ENCODE measurements at regions of chr18 and their contacts with region 1.

Region 1: DNA sequence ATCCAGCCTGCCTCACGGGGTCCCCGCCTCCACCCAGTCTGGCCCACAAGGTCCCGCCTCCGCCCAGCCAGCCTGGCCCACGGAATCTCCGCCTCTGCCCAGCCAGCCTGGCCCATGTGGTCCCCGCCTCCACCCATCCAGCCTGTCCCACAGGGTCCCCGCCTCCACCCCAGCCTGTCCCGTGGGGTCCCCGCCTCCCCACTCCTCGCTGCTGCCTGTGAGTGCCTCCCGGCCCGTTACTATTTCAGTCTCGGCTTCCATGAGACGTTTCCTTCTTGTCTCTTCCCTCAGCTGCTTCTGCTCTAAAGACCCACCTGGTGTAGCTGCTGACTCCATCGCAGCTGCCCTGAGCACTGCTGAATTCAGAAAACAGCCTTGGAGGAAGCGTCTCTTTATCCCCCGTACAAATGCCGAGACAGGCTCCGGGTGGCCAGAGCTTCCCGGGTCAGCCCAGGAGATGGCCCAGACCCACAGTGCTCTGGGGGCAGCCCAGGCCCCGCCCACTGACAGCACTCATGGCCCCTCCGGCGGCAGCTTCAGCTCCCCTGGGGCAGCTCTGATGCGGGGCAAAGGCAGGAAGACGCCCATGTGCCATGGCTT is 69.8 kb downstream of the NFATC1 start:
- DNase-seq: peak; percentile 80
- ATAC-seq: peak; percentile 65
- H3K4me3 ChIP-seq: peak overlapping the region in 4 of 5 experiments; percentile 51 to 61 (median 56)
- H3K4me3 Mint-ChIP-seq: peak overlapping the region; percentile 88
- H3K27ac ChIP-seq: peak overlapping the region; percentile 97 to 98
- H3K27ac Mint-ChIP-seq: peak overlapping the region; percentile 95
- H3K4me1 ChIP-seq: peaks cover 56 to 81% of the 10 kb centered on the region in 2 donors
- H3K4me1 Mint-ChIP-seq: peaks cover 67% of the 10 kb centered on the region
- H3K27me3 ChIP-seq: no peaks in the 10 kb centered on the region
- H3K27me3 Mint-ChIP-seq: no peaks in the 10 kb centered on the region
- CTCF ChIP-seq: no peak

Region 2: DNA sequence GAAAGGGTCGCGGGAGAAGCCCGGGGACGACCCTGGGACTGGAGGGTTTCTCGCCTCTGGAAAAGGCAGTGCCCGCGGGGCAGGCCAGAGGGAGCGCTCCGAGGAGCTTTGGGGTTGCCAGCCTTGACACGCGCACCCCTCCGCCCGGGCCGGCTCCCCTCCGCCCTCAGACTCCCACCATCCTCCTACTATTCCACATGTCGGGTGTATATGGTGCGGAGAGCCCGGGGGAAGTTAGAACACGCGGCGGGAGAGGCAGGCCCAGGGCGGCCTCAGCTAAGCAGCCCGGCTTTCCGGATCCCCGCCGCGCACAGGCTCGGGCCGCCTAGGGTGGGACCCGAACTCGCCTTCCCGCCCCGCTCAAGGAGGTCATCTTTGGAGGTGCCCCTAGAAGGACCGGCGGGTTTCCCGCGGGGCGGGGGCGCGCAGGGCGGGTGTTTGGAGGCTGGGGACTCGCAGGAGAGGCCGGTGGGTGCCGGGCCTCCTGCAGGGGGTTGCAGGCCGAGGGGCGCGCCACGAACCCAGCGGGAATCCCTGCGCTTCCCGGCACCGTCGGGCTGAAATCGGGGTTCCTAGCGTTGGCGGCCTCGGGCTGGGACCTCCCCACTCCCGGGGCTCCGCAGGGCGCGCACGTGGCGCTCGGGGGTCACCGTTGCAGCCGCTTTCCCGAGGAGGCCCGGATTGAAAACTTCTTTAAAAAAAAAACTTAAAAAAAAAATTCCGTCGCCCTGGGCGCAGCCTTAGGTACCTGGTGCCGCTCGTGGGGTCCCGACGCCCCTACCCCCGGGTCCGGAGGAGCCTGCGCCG is 66.0 kb before region 1 on chr18:
- CTCF ChIA-PET with region 1: interaction called, 10 read pairs
- POLR2A ChIA-PET with region 1: interaction called, 10 read pairs
- intact Hi-C with region 1: loop called (anchors 2 kb)
- DNase-seq: peak; percentile 56
- ATAC-seq: peak; percentile 7
- H3K4me3 ChIP-seq: peak overlapping the region; percentile 54 to 79 (median 64)
- H3K4me3 Mint-ChIP-seq: peak overlapping the region; percentile 88
- H3K27ac ChIP-seq: peak overlapping the region; percentile 85 to 88
- H3K27ac Mint-ChIP-seq: peak overlapping the region; percentile 95
- H3K4me1 ChIP-seq: peaks cover 64 to 73% of the 10 kb centered on the region in 2 donors
- H3K4me1 Mint-ChIP-seq: peaks cover 63% of the 10 kb centered on the region
- H3K27me3 ChIP-seq: no peaks in the 10 kb centered on the region
- H3K27me3 Mint-ChIP-seq: no peaks in the 10 kb centered on the region
- CTCF ChIP-seq: no peak

Region 3: GRCh38 chr18:79439201-79440023 is 26.1 kb before region 1 on chr18:
- CTCF ChIA-PET with region 1: interaction called, 4 read pairs
- POLR2A ChIA-PET with region 1: interaction called, 7 read pairs
- intact Hi-C with region 1: loop called (anchors 2 kb)
- DNase-seq: peak; percentile 35
- ATAC-seq: no peak
- H3K4me3 ChIP-seq: no peak overlapping the region
- H3K4me3 Mint-ChIP-seq: no peak overlapping the region
- H3K27ac ChIP-seq: peak overlapping the region in 1 of 2 donors; percentile 46
- H3K27ac Mint-ChIP-seq: peak overlapping the region; percentile 50
- H3K4me1 ChIP-seq: peaks cover 38 to 83% of the 10 kb centered on the region in 2 donors
- H3K4me1 Mint-ChIP-seq: peaks cover 76% of the 10 kb centered on the region
- H3K27me3 ChIP-seq: no peaks in the 10 kb centered on the region
- H3K27me3 Mint-ChIP-seq: no peaks in the 10 kb centered on the region
- CTCF ChIP-seq: no peak

Region 4: GRCh38 chr18:79507076-79507545 is 41.6 kb after region 1 on chr18:
- CTCF ChIA-PET with region 1: interaction called, 12 read pairs
- POLR2A ChIA-PET with region 1: interaction called, 18 read pairs
- intact Hi-C with region 1: loop called (anchors 1 kb)
- DNase-seq: peak; percentile 71
- ATAC-seq: peak; percentile 29
- H3K4me3 ChIP-seq: peak overlapping the region in 4 of 5 experiments; percentile 17 to 43 (median 36)
- H3K4me3 Mint-ChIP-seq: peak overlapping the region; percentile 75
- H3K27ac ChIP-seq: peak overlapping the region; percentile 86 to 91
- H3K27ac Mint-ChIP-seq: peak overlapping the region; percentile 93
- H3K4me1 ChIP-seq: peaks cover 48 to 56% of the 10 kb centered on the region in 2 donors
- H3K4me1 Mint-ChIP-seq: peaks cover 60% of the 10 kb centered on the region
- H3K27me3 ChIP-seq: no peaks in the 10 kb centered on the region
- H3K27me3 Mint-ChIP-seq: no peaks in the 10 kb centered on the region
- CTCF ChIP-seq: no peak

Region 5: GRCh38 chr18:79528846-79529245 is 63.4 kb after region 1 on chr18:
- CTCF ChIA-PET with region 1: interaction called, 5 read pairs
- POLR2A ChIA-PET with region 1: interaction called, 22 read pairs
- intact Hi-C with region 1: loop called (anchors 1 kb)
- DNase-seq: peak; percentile 83
- ATAC-seq: peak; percentile 34
- H3K4me3 ChIP-seq: no peak overlapping the region
- H3K4me3 Mint-ChIP-seq: no peak overlapping the region
- H3K27ac ChIP-seq: no peak overlapping the region
- H3K27ac Mint-ChIP-seq: no peak overlapping the region
- H3K4me1 ChIP-seq: peaks cover 15 to 24% of the 10 kb centered on the region in 2 donors
- H3K4me1 Mint-ChIP-seq: peaks cover 26% of the 10 kb centered on the region
- H3K27me3 ChIP-seq: no peaks in the 10 kb centered on the region
- H3K27me3 Mint-ChIP-seq: no peaks in the 10 kb centered on the region
- CTCF ChIP-seq: peak; percentile 94